Endothelial cell of umbilical vein (primary cell): ENCODE measurements at regions of chrX and their contacts with region 1.

Region 1: DNA sequence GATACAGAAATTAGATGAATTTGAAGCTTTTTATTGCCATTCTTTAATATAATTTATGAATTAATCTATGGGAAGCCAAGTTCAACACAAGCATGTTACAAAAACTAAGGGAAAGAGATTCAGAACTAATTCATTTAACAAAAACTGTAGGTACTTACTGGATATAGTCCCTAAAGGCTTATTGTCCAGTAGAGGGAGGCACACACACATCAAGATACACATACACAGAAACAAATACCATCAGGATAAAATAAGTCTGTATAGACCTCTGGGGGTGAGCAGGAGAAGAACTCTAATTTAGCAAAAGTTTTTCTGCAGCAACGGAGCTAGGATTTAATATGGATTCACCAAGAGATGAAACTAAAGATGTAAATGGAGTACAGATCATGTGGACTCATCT is 83.0 kb upstream of the IL13RA1 start:
- DNase-seq: peak; percentile 59
- H3K4me3 ChIP-seq: no peak overlapping the region
- H3K27ac ChIP-seq: no peak overlapping the region
- H3K4me1 ChIP-seq: no peaks in the 10 kb centered on the region
- H3K27me3 ChIP-seq: no peaks in the 10 kb centered on the region
- CTCF ChIP-seq: peak; percentile 11 to 25
- POLR2A ChIP-seq: no peak

Region 2: DNA sequence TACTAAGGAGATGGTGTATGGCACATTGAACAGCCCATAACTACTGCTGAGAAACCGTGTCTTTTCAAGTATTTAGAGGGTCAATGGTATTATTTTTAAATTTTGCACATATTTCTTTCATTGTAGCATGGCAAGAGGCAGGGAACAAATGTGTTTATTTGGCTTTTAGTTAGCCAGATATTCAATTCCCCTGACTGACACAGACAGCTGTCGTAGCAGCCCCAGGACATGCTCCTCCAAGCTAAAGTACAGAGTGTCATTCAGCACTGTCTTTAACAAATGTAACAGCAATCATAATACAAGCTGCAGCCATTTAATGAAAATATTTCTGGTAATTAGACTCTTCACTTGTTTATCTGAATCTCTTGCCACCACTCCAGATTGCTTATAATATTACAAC is 1214.9 kb before region 1 on chrX:
- CTCF ChIA-PET with region 1: no interaction called
- POLR2A ChIA-PET with region 1: no interaction called
- dilution Hi-C with region 1: no loop called
- intact Hi-C with region 1: no loop called
- DNase-seq: no peak
- H3K4me3 ChIP-seq: no peak overlapping the region
- H3K27ac ChIP-seq: no peak overlapping the region
- H3K4me1 ChIP-seq: no peaks in the 10 kb centered on the region
- H3K27me3 ChIP-seq: no peaks in the 10 kb centered on the region
- CTCF ChIP-seq: no peak
- POLR2A ChIP-seq: no peak

Region 3: DNA sequence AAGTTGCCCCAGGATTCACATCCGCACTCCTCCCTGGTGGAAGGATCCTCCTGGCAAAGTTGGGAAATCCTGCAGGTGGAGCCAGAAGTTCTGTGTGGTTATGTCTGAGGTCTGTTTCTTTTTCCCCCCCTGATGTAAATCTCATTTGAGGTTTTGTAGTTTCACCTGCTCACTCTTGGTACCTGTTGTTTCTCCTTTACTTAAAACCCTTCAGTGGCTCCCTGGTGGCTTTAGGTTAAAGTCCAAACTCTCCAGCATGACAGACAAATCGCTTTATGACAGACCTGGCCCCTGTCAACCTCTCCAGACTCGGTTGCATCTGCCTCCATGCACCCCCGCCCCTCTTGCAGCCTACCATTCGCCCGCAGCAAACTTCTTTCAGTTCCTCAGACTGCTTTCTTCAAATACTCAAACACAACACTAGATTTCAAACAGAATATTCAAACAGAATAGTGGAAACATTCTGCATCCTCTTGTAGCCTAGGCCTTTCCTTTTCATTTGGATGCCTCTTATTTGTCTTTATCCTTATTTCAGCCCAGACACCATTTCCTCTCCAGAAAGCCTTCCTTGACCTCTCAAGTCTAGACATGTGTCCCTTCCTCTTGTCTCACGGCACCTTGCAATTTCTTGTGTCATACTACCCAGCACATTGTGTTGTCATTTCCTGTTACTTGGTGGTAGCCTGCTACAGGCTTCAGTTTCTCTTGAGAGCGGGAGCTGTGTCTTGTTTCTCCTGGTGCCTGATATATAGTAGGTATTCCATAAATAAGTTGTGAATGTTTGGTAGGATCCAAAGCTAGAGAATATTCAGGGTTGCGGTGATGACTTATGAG is 107.8 kb after region 1 on chrX:
- CTCF ChIA-PET with region 1: interaction called, 13 read pairs
- POLR2A ChIA-PET with region 1: no interaction called
- dilution Hi-C with region 1: no loop called
- intact Hi-C with region 1: no loop called
- DNase-seq: peak; percentile 60
- H3K4me3 ChIP-seq: no peak overlapping the region
- H3K27ac ChIP-seq: peak overlapping the region; percentile 92
- H3K4me1 ChIP-seq: peaks cover 11% of the 10 kb centered on the region
- H3K27me3 ChIP-seq: no peaks in the 10 kb centered on the region
- CTCF ChIP-seq: no peak
- POLR2A ChIP-seq: no peak